CD14-positive monocyte (primary cell): ENCODE measurements at regions of chr12 and their contacts with region 1.

Region 1: GRCh38 chr12:3551386-3551785 is 60.4 kb downstream of the PRMT8 start:
- DNase-seq: no peak
- H3K4me3 ChIP-seq: no peak overlapping the region
- H3K4me3 Mint-ChIP-seq: no peak overlapping the region
- H3K27ac ChIP-seq: no peak overlapping the region
- H3K27ac Mint-ChIP-seq: no peak overlapping the region
- H3K4me1 ChIP-seq: no peaks in the 10 kb centered on the region
- H3K4me1 Mint-ChIP-seq: peaks cover 4% of the 10 kb centered on the region
- H3K27me3 ChIP-seq: peaks cover 0 to 5% of the 10 kb centered on the region in 2 donors
- H3K27me3 Mint-ChIP-seq: peaks cover 9 to 15% (median 10%) of the 10 kb centered on the region in 3 donors
- CTCF ChIP-seq: no peak

Region 2: DNA sequence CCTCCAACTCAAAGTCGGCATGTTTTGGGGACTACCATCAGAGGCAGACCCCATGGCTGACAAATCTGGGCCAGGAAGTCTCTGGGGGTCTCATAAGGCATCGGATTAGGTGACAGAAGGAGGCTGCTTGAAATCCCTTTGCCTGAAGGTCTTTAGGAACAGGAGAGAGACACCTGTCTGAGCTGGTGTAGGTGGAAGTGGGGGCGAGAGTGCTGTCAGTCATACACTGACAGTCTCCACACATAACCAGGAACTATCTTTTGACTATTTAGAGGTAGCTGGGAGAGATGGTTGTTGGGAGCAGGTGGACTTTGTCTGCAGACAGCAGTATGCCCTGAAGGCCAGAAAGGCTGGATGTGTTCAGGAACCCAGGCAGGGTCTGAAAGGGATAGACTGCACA is 38.4 kb after region 1 on chr12:
- intact Hi-C with region 1: loop called in 1 of 2 experiments (anchors 2 kb)
- DNase-seq: no peak
- H3K4me3 ChIP-seq: no peak overlapping the region
- H3K4me3 Mint-ChIP-seq: no peak overlapping the region
- H3K27ac ChIP-seq: no peak overlapping the region
- H3K27ac Mint-ChIP-seq: no peak overlapping the region
- H3K4me1 ChIP-seq: no peaks in the 10 kb centered on the region
- H3K4me1 Mint-ChIP-seq: no peaks in the 10 kb centered on the region
- H3K27me3 ChIP-seq: peaks cover 0 to 7% of the 10 kb centered on the region in 2 donors
- H3K27me3 Mint-ChIP-seq: peaks cover 6 to 11% (median 7%) of the 10 kb centered on the region in 3 donors
- CTCF ChIP-seq: no peak